ENCODE measurements at regions of chr5 and their contacts with region 1.

Region 1: DNA sequence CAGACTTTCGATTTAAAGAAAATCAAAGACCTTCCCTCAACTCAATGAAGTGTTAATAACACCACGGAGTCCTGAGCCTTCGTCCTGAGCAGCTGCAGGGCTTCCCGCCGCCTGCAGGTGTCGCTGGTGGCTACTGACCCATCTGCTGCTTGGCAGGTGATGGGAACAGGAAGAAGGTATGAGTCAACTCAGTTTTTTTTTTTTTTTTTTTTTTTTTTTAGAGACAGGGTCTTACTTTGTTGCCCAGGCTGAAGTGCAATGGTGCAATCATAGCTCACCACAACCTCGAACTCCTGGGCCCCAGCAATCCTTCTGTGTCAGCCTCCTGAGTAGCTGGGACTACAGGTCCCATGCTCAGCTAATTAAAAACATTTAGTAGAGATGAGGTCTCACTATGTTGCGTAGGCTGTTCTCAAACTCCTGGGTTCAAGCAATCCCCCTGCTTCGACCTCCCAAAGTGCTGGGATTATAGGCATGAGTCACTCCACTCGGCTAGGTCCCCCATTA is 185.7 kb upstream of the IL12B start:
- DNase-seq: peak; percentile 44
- ATAC-seq: peak; percentile 94
- H3K4me3 ChIP-seq: no peak overlapping the region
- H3K27ac ChIP-seq: no peak overlapping the region
- H3K4me1 ChIP-seq: peaks cover 0 to 11% of the 10 kb centered on the region in 2 experiments; a peak in 2 of 4 replicates
- H3K27me3 ChIP-seq: no peaks in the 10 kb centered on the region
- CTCF ChIP-seq: peak; percentile 77 to 96 (median 95)
- POLR2A ChIP-seq: no peak
- RAD21 ChIP-seq: peak; percentile 91

Region 2: DNA sequence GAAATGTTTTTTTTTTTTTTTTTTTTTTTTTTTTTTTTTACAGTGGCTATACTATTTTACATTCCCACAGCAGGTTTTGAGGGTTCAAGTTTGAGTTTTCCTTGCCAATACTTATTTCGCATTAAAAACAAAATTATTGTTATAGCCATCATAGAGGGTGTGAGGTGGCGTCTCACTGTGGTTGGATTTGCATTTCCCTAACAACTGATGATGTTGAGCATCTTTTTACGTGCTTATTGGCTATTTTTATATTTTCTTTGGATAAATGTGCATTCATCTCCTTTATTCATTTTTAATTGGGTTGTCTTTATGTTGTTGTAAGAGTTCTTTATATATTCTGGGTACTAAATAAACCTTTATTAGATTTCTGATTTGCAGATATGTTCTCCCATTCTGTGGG is 271.8 kb before region 1 on chr5:
- CTCF ChIA-PET with region 1: no interaction called
- POLR2A ChIA-PET with region 1: no interaction called
- RAD21 ChIA-PET with region 1: no interaction called
- intact Hi-C with region 1: no loop called
- DNase-seq: no peak
- ATAC-seq: no peak
- H3K4me3 ChIP-seq: no peak overlapping the region
- H3K27ac ChIP-seq: no peak overlapping the region
- H3K4me1 ChIP-seq: peaks cover 6 to 12% of the 10 kb centered on the region in 2 experiments; a peak in 3 of 4 replicates
- H3K27me3 ChIP-seq: no peaks in the 10 kb centered on the region
- CTCF ChIP-seq: no peak
- POLR2A ChIP-seq: no peak
- RAD21 ChIP-seq: no peak

Region 3: DNA sequence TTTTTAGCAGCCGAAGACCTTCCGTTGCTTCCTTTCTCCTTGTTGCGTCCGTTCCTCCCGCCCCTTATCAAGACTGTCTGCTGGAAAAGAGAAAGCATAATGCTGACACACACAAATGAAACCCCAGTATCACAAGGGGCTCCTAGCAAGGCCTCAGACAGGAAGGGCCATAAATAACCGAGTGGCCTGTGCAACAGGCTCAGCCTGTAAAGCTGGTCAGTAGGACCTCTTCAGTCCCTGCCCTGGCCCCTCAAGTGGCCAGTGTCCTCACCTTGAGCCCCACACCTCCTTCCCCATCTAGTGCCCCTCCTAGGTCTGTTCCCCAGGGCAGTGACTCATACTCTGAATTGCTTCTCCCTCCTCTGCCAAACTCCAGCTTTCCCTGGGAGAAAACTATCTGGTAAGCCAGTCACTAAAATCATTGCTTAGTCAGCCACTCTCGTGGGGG is 11.1 kb before region 1 on chr5:
- CTCF ChIA-PET with region 1: interaction called, 10 read pairs
- POLR2A ChIA-PET with region 1: no interaction called
- RAD21 ChIA-PET with region 1: no interaction called
- intact Hi-C with region 1: no loop called
- DNase-seq: no peak
- ATAC-seq: peak; percentile 46; the same call in 1 of the 2 replicates
- H3K4me3 ChIP-seq: no peak overlapping the region
- H3K27ac ChIP-seq: no peak overlapping the region
- H3K4me1 ChIP-seq: peaks cover 6 to 12% of the 10 kb centered on the region in 2 experiments
- H3K27me3 ChIP-seq: no peaks in the 10 kb centered on the region
- CTCF ChIP-seq: no peak
- POLR2A ChIP-seq: no peak
- RAD21 ChIP-seq: 0 out of 2 replicates have a peak, but pooled peaks have one; percentile 6

Region 4: DNA sequence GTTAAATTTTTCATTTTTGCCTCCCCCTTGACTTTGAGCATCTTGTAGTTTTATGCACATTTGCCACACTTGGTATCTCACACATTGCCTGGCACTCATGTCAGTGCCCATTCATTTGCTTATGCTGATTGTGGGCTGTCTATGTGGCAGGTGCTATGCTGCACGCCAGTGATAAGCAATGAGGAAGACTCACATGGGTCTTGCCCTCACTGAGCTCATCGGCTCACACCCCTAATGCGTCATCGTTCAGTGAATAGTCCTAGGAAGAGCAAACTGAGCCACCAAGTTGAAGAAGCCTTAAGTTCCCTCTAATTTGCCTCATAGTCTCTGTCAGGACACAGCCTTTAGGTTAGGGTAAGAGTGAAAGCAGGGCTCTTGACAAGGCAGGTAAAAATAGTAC is 23.7 kb after region 1 on chr5:
- CTCF ChIA-PET with region 1: no interaction called
- POLR2A ChIA-PET with region 1: no interaction called
- RAD21 ChIA-PET with region 1: no interaction called
- intact Hi-C with region 1: no loop called
- DNase-seq: no peak
- ATAC-seq: no peak
- H3K4me3 ChIP-seq: no peak overlapping the region
- H3K27ac ChIP-seq: no peak overlapping the region
- H3K4me1 ChIP-seq: peaks cover 0 to 7% of the 10 kb centered on the region in 2 experiments; a peak in 1 of 4 replicates
- H3K27me3 ChIP-seq: no peaks in the 10 kb centered on the region
- CTCF ChIP-seq: no peak
- POLR2A ChIP-seq: no peak
- RAD21 ChIP-seq: no peak

Region 5: GRCh38 chr5:159682623-159683022 is 166.7 kb after region 1 on chr5:
- CTCF ChIA-PET with region 1: interaction called, 3 read pairs
- POLR2A ChIA-PET with region 1: no interaction called
- RAD21 ChIA-PET with region 1: interaction called in 1 of 2 experiments, 7 read pairs
- intact Hi-C with region 1: loop called (anchors 5 kb)
- DNase-seq: peak; percentile 12
- ATAC-seq: peak; percentile 50; the same call in 1 of the 2 replicates
- H3K4me3 ChIP-seq: no peak overlapping the region
- H3K27ac ChIP-seq: no peak overlapping the region
- H3K4me1 ChIP-seq: no peaks in the 10 kb centered on the region
- H3K27me3 ChIP-seq: no peaks in the 10 kb centered on the region
- CTCF ChIP-seq: peak; percentile 15 to 47 (median 44); a peak in 3 of 6 replicates
- POLR2A ChIP-seq: no peak
- RAD21 ChIP-seq: peak; percentile 74

Region 6: GRCh38 chr5:159965031-159965837 is 449.3 kb after region 1 on chr5:
- CTCF ChIA-PET with region 1: interaction called, 3 read pairs
- POLR2A ChIA-PET with region 1: no interaction called
- RAD21 ChIA-PET with region 1: no interaction called
- intact Hi-C with region 1: loop called (anchors 1 kb)
- DNase-seq: peak; percentile 33
- ATAC-seq: peak; percentile 95
- H3K4me3 ChIP-seq: no peak overlapping the region
- H3K27ac ChIP-seq: no peak overlapping the region
- H3K4me1 ChIP-seq: peaks cover 0 to 2% of the 10 kb centered on the region in 2 experiments; a peak in 1 of 4 replicates
- H3K27me3 ChIP-seq: no peaks in the 10 kb centered on the region
- CTCF ChIP-seq: peak; percentile 61 to 77 (median 71)
- POLR2A ChIP-seq: no peak
- RAD21 ChIP-seq: peak; percentile 84